Gastrocnemius medialis (tissue), 4 donors: ENCODE measurements at regions of chr17 and their contacts with region 1.

Region 1: DNA sequence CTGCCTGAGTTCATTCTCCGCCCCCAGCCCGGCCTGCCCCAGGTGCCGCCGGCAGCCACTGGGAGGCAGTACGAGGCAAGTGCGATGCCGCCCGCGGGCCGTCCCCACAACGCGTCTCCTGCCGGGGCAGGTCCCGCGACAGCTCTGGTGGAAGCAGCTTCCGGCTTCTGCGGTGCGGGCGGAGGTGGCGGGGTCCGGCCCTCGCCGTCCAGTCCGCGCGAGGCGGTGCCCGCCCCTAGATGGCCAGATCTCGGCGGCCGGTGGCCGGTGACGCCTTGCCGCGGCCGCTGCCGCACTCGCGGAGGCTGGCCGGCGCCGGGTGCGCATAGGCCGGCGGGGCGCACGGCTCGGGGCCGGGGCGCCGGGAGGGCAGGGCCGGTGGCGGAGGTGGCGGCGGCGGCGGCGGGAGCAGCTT is 1.8 kb downstream of the GJD3 start:
- DNase-seq: no peak
- ATAC-seq: peak; percentile 20 to 23
- H3K4me3 ChIP-seq: peak overlapping the region; percentile 56 to 70 (median 62)
- H3K27ac ChIP-seq: no peak overlapping the region
- H3K4me1 ChIP-seq: peaks cover 6% of the 10 kb centered on the region in 2 donors
- H3K27me3 ChIP-seq: no peaks in the 10 kb centered on the region
- CTCF ChIP-seq: peak in 4 of 5 experiments; percentile 25 to 52 (median 46)
- POLR2A ChIP-seq: no peak

Region 2: GRCh38 chr17:40209404-40210093 is 153.2 kb before region 1 on chr17:
- in situ Hi-C with region 1: loop called in 2 of 4 experiments (anchors 10 to 25 kb)
- intact Hi-C with region 1: loop called (anchors 10 kb)
- DNase-seq: no peak
- ATAC-seq: no peak
- H3K4me3 ChIP-seq: no peak overlapping the region
- H3K27ac ChIP-seq: no peak overlapping the region
- H3K4me1 ChIP-seq: no peaks in the 10 kb centered on the region
- H3K27me3 ChIP-seq: no peaks in the 10 kb centered on the region
- CTCF ChIP-seq: no peak
- POLR2A ChIP-seq: no peak

Region 3: GRCh38 chr17:40303009-40303657 is 59.6 kb before region 1 on chr17:
- in situ Hi-C with region 1: loop called in 3 of 4 experiments (anchors 5 kb)
- intact Hi-C with region 1: no loop called
- DNase-seq: peak in 1 of 2 donors; percentile 66
- ATAC-seq: peak; percentile 92 to 98
- H3K4me3 ChIP-seq: no peak overlapping the region
- H3K27ac ChIP-seq: peak overlapping the region; percentile 78 to 87 (median 82)
- H3K4me1 ChIP-seq: peaks cover 35 to 50% of the 10 kb centered on the region in 2 donors
- H3K27me3 ChIP-seq: no peaks in the 10 kb centered on the region
- CTCF ChIP-seq: peak; percentile 82 to 92 (median 86)
- POLR2A ChIP-seq: no peak

Region 4: GRCh38 chr17:40410082-40410481 is 47.4 kb after region 1 on chr17:
- in situ Hi-C with region 1: loop called in 1 of 4 experiments (anchors 5 kb)
- intact Hi-C with region 1: loop called (anchors 2 kb)
- DNase-seq: no peak
- ATAC-seq: no peak
- H3K4me3 ChIP-seq: no peak overlapping the region
- H3K27ac ChIP-seq: no peak overlapping the region
- H3K4me1 ChIP-seq: no peaks in the 10 kb centered on the region
- H3K27me3 ChIP-seq: no peaks in the 10 kb centered on the region
- CTCF ChIP-seq: no peak
- POLR2A ChIP-seq: no peak

Region 5: DNA sequence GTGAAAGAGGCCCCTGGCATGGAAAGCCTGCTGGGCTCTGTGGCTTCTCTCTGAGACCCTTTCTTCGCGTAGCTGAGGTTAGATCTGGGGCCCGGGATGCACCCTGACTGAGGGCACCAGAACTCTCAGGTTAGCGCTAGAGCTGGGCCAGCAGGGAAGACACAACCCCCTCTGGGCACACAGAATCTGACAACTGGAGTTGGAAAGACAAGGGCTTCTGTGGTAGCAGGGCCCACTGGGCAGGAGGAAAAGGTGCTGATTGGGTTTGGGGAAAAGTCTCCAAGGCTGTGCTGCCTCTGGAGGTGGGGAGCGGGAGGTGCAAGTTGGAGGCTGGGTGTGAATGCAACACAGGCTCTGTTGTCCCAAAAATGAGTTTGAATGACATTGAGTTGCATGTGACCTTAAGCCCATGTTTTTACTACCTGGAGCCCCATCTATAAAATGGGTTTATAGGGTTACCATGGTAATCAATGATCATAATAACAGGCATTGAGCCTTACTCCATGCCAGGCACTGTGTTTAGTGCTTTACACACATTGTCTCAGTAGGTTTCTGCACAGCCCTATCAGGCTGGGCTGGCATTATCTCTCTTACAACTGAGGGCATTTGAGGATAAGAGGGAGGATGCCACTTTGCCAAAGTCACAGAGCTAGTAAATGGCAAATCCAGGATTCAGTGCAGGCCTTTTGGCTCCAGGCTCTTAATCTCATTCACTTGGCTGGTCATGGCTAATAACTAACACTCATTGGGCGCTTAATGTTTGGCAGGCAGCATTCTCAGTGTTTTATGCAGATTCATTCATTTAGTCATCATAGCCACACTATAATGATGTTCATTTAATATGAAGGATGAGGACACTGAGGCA is 71.1 kb after region 1 on chr17:
- in situ Hi-C with region 1: no loop called
- intact Hi-C with region 1: loop called (anchors 5 kb)
- DNase-seq: no peak
- ATAC-seq: no peak
- H3K4me3 ChIP-seq: no peak overlapping the region
- H3K27ac ChIP-seq: peak overlapping the region in 1 of 4 donors; percentile 12
- H3K4me1 ChIP-seq: peaks cover 0 to 8% of the 10 kb centered on the region in 2 donors
- H3K27me3 ChIP-seq: no peaks in the 10 kb centered on the region
- CTCF ChIP-seq: peak in 4 of 5 experiments; percentile 12 to 44 (median 24)
- POLR2A ChIP-seq: no peak

Region 6: GRCh38 chr17:40559954-40560591 is 197.4 kb after region 1 on chr17:
- in situ Hi-C with region 1: no loop called
- intact Hi-C with region 1: loop called (anchors 1 kb)
- DNase-seq: peak; percentile 61 to 81
- ATAC-seq: peak; percentile 89 to 92
- H3K4me3 ChIP-seq: no peak overlapping the region
- H3K27ac ChIP-seq: peak overlapping the region; percentile 41 to 73 (median 65)
- H3K4me1 ChIP-seq: peaks cover 6 to 7% of the 10 kb centered on the region in 2 donors
- H3K27me3 ChIP-seq: no peaks in the 10 kb centered on the region
- CTCF ChIP-seq: peak; percentile 95 to 98 (median 96)
- POLR2A ChIP-seq: no peak